SK-N-SH (cell line): ENCODE measurements at regions of chr12 and their contacts with region 1.

Region 1: GRCh38 chr12:442235-442884 is 17.4 kb upstream of the B4GALNT3 start:
- DNase-seq: peak; percentile 70
- H3K4me3 ChIP-seq: no peak overlapping the region; a peak in 1 of 4 replicates
- H3K27ac ChIP-seq: no peak overlapping the region
- H3K4me1 ChIP-seq: no peaks in the 10 kb centered on the region
- H3K27me3 ChIP-seq: no peaks in the 10 kb centered on the region
- CTCF ChIP-seq: peak; percentile 79
- EP300 ChIP-seq: no peak
- RAD21 ChIP-seq: peak; percentile 85

Region 2: DNA sequence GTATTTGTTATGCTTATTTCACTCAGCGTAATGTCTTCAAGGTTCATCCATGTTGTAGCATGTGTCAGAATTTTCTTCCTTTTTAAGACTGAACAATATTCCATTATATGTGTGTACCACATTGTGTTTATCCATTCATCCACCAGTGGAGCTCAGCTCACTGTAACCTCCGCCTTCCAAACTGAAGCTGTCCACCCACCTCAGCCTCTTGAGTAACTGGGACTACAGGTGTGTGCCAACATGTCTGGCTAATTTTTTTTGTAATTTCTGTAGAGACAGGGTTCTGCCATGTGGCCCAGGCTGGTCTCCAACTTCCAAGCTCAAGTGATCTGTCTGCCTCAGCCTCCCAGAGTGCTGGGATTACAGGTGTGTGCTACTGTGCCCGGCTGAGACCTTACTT is 19.8 kb before region 1 on chr12:
- CTCF ChIA-PET with region 1: interaction called, 62 read pairs
- POLR2A ChIA-PET with region 1: no interaction called
- DNase-seq: no peak
- H3K4me3 ChIP-seq: no peak overlapping the region
- H3K27ac ChIP-seq: no peak overlapping the region
- H3K4me1 ChIP-seq: no peaks in the 10 kb centered on the region
- H3K27me3 ChIP-seq: no peaks in the 10 kb centered on the region
- CTCF ChIP-seq: no peak
- EP300 ChIP-seq: no peak
- RAD21 ChIP-seq: no peak

Region 3: DNA sequence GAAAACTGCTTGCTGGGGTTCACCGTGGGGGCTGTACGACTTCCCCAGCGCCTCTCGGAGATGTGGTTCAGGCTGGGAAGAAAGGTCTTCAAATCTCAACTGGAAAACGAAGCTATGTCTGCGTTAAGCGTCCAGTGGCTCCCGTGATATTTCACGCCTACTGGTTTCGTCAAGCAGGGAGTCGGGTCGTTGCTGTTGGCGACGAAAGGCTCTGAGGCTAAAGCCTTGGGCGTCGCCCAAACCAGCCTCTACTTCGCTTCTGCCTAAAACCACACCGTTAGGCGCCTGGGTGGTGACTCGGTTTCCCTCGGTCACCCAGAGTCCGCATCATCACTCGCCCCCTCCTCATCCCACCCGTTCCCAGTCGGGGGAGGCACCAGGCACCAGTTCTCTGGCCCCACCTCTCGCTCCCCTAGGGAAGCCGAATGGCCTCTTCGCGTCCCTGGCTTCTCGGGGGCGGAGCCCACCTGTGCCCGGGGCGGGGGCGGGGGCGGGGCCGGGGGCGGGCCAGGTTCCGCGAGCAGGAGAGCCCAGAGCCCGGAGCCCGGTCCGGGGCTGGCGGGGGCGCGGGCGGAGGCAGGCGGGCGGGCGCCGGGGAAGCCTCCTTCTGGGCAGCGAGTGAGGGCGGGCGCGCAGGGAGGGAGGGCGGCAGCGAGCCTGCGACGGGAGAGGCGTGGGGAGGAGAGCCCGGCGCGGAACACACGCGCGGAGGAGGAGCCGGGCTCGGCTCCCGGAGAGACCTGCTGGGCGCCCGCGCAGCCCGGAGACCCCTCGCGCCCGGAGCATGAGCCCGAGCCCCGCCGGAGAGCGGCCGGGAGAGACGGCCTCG is 17.3 kb after region 1 on chr12 and contains the start of gene B4GALNT3:
- CTCF ChIA-PET with region 1: interaction called, 64 read pairs
- POLR2A ChIA-PET with region 1: no interaction called
- DNase-seq: peak; percentile 88
- H3K4me3 ChIP-seq: peak within 1 kb of the TSS; percentile 55
- H3K27ac ChIP-seq: no peak within 1 kb of the TSS
- H3K4me1 ChIP-seq: peaks cover 0 to 5% of the 10 kb centered on the region in 2 experiments; a peak in 1 of 4 replicates
- H3K27me3 ChIP-seq: peaks cover 47% of the 10 kb centered on the region
- CTCF ChIP-seq: no peak
- EP300 ChIP-seq: no peak
- RAD21 ChIP-seq: no peak
- polyA plus RNA-seq, gene B4GALNT3: 0.34 and 0.53 TPM in 2 replicates

Region 4: GRCh38 chr12:501722-502447 is 59.5 kb after region 1 on chr12:
- CTCF ChIA-PET with region 1: interaction called, 10 read pairs
- POLR2A ChIA-PET with region 1: no interaction called
- DNase-seq: no peak
- H3K4me3 ChIP-seq: no peak overlapping the region
- H3K27ac ChIP-seq: no peak overlapping the region
- H3K4me1 ChIP-seq: no peaks in the 10 kb centered on the region
- H3K27me3 ChIP-seq: peaks cover 24% of the 10 kb centered on the region; the same call in 1 of the 2 replicates
- CTCF ChIP-seq: no peak
- EP300 ChIP-seq: no peak
- RAD21 ChIP-seq: no peak

Region 5: DNA sequence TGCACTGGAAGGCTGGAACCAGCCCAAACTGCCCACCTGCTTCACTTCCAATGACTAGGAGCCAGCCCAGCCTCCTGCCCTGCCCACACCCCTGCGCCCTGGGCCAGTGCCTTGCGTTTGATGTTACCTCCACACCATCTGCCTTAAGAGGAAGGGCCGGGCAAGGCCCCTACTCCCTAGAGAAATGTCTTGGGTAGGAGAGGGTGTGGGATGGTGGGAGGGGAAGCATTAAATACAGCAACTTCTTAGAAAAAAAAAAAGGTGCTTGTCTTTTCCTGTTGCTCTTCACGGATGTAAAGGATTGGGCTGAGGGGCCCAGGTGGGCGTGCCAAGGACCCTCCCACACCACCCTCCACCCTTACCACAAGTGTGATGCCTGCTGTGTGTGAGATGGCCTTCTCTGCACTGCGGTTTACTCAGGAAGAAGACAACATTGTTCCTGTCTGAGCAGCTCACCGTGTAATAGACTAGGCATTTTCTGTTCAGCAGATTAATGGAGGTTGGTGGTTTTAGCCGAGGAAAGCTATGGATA is 121.0 kb after region 1 on chr12:
- CTCF ChIA-PET with region 1: interaction called, 10 read pairs
- POLR2A ChIA-PET with region 1: no interaction called
- DNase-seq: no peak
- H3K4me3 ChIP-seq: no peak overlapping the region
- H3K27ac ChIP-seq: no peak overlapping the region
- H3K4me1 ChIP-seq: peaks cover 0 to 16% of the 10 kb centered on the region in 2 experiments; a peak in 1 of 4 replicates
- H3K27me3 ChIP-seq: no peaks in the 10 kb centered on the region; the same call in 1 of the 2 replicates
- CTCF ChIP-seq: no peak
- EP300 ChIP-seq: no peak
- RAD21 ChIP-seq: no peak

Region 6: DNA sequence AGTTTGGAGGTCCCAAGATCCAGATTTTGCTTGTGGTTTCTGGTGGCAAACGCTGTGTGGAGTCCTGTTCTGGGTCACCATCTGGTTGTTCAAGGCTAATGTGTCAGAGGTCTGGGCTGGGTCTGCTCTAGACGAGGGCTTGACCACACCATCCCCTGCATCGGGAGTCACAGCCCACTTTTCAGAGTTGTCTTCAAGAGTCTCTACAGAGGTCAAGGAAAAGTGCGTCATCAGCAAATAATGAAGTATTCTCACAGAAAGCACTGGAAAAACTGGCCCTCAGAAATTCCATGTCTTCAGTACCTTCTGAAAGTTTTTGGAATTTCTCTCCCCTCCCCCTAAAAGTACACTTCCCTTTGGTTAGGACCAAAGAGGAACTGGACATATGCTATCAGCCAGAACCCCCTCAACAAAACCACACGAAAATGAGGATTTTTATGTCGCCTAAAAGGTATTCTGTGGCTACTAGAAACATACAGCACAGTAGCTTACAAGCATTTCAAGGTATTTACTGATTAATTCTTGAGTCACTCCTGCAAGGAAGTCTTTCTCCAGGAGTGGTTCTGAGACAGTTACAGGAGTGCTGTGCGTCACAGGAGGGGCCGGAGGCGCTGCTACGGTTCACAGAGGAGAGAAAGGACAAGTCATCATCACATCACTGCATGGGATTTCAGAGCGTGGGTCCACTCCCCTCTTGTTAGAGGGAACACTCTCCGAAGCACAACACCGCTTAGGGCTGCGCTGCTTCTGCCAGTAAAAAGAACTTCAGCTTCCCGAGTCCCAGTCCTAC is 471.8 kb after region 1 on chr12:
- CTCF ChIA-PET with region 1: no interaction called
- POLR2A ChIA-PET with region 1: no interaction called
- DNase-seq: no peak
- H3K4me3 ChIP-seq: no peak overlapping the region
- H3K27ac ChIP-seq: peak overlapping the region in 1 of 2 experiments; percentile 58; a peak in 2 of 4 replicates
- H3K4me1 ChIP-seq: no peaks in the 10 kb centered on the region
- H3K27me3 ChIP-seq: no peaks in the 10 kb centered on the region
- CTCF ChIP-seq: no peak
- EP300 ChIP-seq: no peak
- RAD21 ChIP-seq: no peak